AG04450 (cell line): ENCODE measurements at regions of chr20 and their contacts with region 1.

Region 1: DNA sequence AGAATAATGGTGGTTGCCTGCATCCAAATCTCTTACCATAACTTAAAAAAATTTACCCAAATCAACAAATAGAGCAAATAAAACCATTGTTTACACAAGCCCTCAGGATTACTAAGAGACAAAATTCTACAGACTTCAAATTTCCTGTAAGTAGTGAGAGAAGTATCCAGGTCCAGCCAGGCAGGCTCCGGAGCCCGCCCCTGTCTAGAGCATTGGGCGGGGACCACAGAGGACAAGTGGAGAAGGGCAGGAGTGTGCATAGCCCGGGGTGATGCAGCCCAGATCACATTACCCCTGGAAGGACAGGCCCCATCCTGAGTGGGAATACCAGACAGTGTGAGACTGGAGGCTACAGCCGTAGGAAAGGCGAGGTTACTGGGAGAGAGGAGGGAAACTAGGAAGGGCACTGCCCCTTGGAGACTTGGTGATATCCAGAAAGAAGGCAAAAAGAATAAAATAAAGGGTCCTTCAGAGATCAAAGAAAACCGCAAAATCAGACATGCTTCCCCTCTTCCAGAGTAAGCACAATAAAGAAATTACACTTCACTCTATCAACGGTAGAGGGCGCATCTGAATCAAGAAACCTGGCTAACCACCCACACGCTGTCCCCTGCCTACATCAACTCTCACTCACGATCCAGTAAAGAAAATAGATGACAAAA is 26.6 kb downstream of the RIN2 start:
- DNase-seq: peak; percentile 76
- H3K4me3 ChIP-seq: peak overlapping the region; percentile 34
- H3K27ac ChIP-seq: peak overlapping the region; percentile 93
- H3K27me3 ChIP-seq: no peaks in the 10 kb centered on the region
- CTCF ChIP-seq: peak; percentile 77

Region 2: DNA sequence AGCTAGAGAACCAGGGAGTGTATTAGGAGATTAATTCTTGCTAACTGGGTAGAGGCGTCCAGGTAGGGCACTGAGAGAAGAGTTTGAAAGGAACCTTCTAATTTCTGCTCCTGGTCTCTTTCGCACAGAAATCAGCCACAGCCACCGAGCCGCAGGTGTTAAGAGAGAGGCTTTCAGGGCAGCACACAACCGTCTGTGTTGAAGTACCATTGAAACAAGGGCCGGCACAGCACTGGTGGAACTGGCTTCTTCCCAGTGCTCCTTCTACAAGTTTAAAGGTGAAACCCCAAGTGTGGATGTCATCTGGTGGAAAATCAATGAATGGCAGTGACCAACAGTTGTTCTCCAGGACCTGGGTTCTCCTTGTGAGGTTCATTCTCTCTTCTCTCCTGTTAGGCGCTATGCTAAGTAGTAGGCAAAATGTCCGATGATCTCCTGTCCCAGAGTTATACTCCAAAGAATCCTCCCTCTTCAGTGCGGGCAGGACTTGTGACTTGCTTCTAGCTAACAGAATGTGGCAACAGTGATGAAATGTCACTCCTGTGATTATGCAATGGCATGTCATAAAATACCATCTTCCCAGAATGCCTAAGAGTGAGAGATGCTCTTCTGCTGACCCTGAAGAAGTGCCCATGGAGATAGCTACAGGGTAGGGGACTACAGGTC is 41.5 kb before region 1 on chr20:
- CTCF ChIA-PET with region 1: no interaction called
- POLR2A ChIA-PET with region 1: no interaction called
- DNase-seq: no peak
- H3K4me3 ChIP-seq: no peak overlapping the region
- H3K27ac ChIP-seq: no peak overlapping the region
- H3K27me3 ChIP-seq: peaks cover 11% of the 10 kb centered on the region
- CTCF ChIP-seq: no peak

Region 3: GRCh38 chr20:19815553-19815991 is 30.9 kb after region 1 on chr20:
- CTCF ChIA-PET with region 1: interaction called, 18 read pairs
- POLR2A ChIA-PET with region 1: interaction called, 7 read pairs
- DNase-seq: peak; percentile 97
- H3K4me3 ChIP-seq: no peak overlapping the region
- H3K27ac ChIP-seq: peak overlapping the region; percentile 92
- H3K27me3 ChIP-seq: no peaks in the 10 kb centered on the region
- CTCF ChIP-seq: no peak

Region 4: GRCh38 chr20:19889011-19889953 is 104.6 kb after region 1 on chr20:
- CTCF ChIA-PET with region 1: interaction called, 25 read pairs
- POLR2A ChIA-PET with region 1: interaction called, 28 read pairs
- DNase-seq: peak; percentile 29
- H3K4me3 ChIP-seq: peak overlapping the region; percentile 61
- H3K27ac ChIP-seq: peak overlapping the region; percentile 87
- H3K27me3 ChIP-seq: no peaks in the 10 kb centered on the region
- CTCF ChIP-seq: no peak